IMR-90 (cell line): ENCODE measurements at regions of chr10 and their contacts with region 1.

Region 1: DNA sequence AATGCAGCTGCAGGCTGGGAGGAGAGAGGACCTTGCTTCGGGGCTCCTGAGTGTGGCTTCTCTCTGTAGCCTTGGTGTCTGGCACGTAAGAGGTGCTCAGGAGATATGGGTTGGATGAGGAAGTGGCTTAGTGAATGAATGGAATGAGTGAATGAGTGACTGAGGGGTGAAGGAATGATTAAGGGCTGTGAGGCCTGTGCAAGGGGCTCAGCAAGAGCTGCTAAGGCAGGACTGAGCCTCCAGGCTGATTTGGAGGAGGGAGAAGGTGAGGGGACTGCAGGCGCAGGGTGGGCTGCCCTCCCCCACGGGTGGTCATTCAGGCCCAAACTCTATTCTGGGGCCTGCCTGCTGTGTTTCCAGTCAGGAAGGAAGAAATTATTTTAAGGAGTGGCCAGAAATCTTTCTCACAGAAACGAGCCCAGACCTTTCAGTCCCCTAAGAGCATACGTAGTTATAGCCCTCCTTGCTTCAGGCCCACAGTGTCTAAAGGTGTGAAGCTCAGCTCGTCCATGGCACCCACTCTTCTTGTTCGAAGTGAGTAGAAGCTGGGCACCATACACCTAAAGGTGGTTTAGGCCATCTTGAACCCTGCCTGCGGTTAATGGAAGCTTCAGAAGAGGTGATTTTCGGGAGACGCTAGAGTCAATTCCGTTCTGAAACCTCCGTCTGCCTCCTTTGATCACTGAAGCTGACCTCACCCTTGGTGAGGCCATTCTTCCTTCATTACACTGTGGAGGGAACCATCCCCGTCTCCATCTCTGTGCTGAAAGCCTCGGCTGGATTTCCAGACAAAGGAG is 49.5 kb upstream of the SAMD8 start:
- DNase-seq: no peak
- ATAC-seq: no peak
- H3K4me3 ChIP-seq: no peak overlapping the region
- H3K27ac ChIP-seq: no peak overlapping the region
- H3K4me1 ChIP-seq: peaks cover 3% of the 10 kb centered on the region
- H3K27me3 ChIP-seq: no peaks in the 10 kb centered on the region
- CTCF ChIP-seq: no peak
- POLR2A ChIP-seq: no peak
- RAD21 ChIP-seq: no peak

Region 2: GRCh38 chr10:74967911-74968645 is 93.8 kb before region 1 on chr10:
- CTCF ChIA-PET with region 1: no interaction called
- POLR2A ChIA-PET with region 1: no interaction called
- dilution Hi-C with region 1: no loop called
- in situ Hi-C with region 1: no loop called
- intact Hi-C with region 1: no loop called
- DNase-seq: no peak
- ATAC-seq: no peak
- H3K4me3 ChIP-seq: no peak overlapping the region
- H3K27ac ChIP-seq: no peak overlapping the region
- H3K4me1 ChIP-seq: peaks cover 2% of the 10 kb centered on the region; the same call in 1 of the 2 replicates
- H3K27me3 ChIP-seq: no peaks in the 10 kb centered on the region
- CTCF ChIP-seq: no peak
- POLR2A ChIP-seq: no peak
- RAD21 ChIP-seq: no peak

Region 3: GRCh38 chr10:75043256-75044131 is 18.4 kb before region 1 on chr10:
- CTCF ChIA-PET with region 1: no interaction called
- POLR2A ChIA-PET with region 1: no interaction called
- dilution Hi-C with region 1: no loop called
- in situ Hi-C with region 1: no loop called
- intact Hi-C with region 1: loop called (anchors 2 kb)
- DNase-seq: no peak
- ATAC-seq: no peak
- H3K4me3 ChIP-seq: no peak overlapping the region
- H3K27ac ChIP-seq: no peak overlapping the region
- H3K4me1 ChIP-seq: peaks cover 9% of the 10 kb centered on the region; the same call in 1 of the 2 replicates
- H3K27me3 ChIP-seq: no peaks in the 10 kb centered on the region
- CTCF ChIP-seq: no peak
- POLR2A ChIP-seq: no peak
- RAD21 ChIP-seq: no peak